ENCODE measurements at regions of chr1 and their contacts with region 1.

Region 1: GRCh38 chr1:185526344-185527307 is 207.6 kb upstream of the HMCN1 start:
- DNase-seq: no peak
- ATAC-seq: peak; percentile 97
- H3K4me3 Mint-ChIP-seq: peak overlapping the region; percentile 1
- H3K27ac Mint-ChIP-seq: peak overlapping the region; percentile 77
- H3K4me1 Mint-ChIP-seq: peaks cover 21% of the 10 kb centered on the region
- H3K27me3 Mint-ChIP-seq: no peaks in the 10 kb centered on the region
- CTCF ChIP-seq: no peak

Region 2: DNA sequence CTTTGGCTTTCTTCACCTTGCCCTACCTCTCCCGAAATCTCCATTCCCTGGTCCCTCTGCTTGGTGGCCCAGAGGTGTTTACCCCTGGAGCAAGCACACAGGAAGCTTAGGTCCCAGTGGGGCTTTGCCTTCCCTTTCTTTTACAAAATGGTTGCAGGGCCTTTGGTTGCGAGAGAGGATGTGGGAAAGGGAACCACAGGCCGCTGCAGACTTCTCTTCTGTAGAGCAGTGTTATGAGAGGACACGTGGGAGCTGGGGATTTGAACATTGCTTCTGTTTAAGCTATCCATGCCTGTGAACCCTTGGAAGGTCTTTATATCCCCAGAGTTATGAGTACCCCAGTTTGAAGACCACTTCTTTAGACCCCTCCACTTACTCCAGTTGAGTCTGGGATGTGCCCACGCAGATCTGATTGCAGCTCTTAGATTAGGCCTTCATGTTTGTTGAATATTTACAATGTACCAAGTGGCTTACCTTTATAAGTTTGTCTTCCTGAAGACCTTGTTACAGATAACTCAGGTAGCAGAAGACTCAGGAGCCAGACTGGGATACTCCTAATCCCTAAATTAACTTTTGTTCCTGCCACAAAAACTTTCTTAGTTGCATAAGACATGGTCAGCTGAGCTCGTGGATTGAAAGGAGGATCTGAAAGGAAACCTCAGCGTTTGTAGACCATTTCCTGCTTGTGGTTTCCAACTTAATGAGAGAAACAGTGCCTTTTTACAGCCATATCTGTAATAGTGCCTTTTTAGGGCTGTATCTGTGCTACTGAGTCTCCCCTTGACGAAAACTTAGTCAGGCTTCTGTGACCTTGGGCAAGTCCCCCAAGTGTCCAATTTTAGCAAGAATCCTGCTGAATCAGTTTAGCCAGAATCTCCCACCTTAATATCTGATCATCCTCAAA is 187.7 kb before region 1 on chr1:
- CTCF ChIA-PET with region 1: no interaction called
- POLR2A ChIA-PET with region 1: no interaction called
- intact Hi-C with region 1: loop called (anchors 2 kb)
- DNase-seq: no peak
- ATAC-seq: peak; percentile 85
- H3K4me3 Mint-ChIP-seq: peak overlapping the region; percentile 71
- H3K27ac Mint-ChIP-seq: peak overlapping the region; percentile 95
- H3K4me1 Mint-ChIP-seq: peaks cover 35% of the 10 kb centered on the region
- H3K27me3 Mint-ChIP-seq: no peaks in the 10 kb centered on the region
- CTCF ChIP-seq: no peak

Region 3: GRCh38 chr1:185360714-185361113 is 165.9 kb before region 1 on chr1:
- CTCF ChIA-PET with region 1: no interaction called
- POLR2A ChIA-PET with region 1: no interaction called
- intact Hi-C with region 1: no loop called
- DNase-seq: no peak
- ATAC-seq: no peak
- H3K4me3 Mint-ChIP-seq: no peak overlapping the region
- H3K27ac Mint-ChIP-seq: no peak overlapping the region
- H3K4me1 Mint-ChIP-seq: peaks cover 26% of the 10 kb centered on the region
- H3K27me3 Mint-ChIP-seq: no peaks in the 10 kb centered on the region
- CTCF ChIP-seq: no peak